Heart right ventricle (tissue), 16 donors: ENCODE measurements at regions of chr7 and their contacts with region 1.

Region 1: GRCh38 chr7:155380221-155380861 is 77.6 kb upstream of the EN2 start:
- DNase-seq: peak; percentile 53 to 60
- ATAC-seq: peak; percentile 57 to 86 (median 77)
- H3K4me3 ChIP-seq: no peak overlapping the region
- H3K27ac ChIP-seq: no peak overlapping the region
- H3K4me1 ChIP-seq: peaks cover 0 to 48% (median 40%) of the 10 kb centered on the region in 9 donors
- H3K27me3 ChIP-seq: peaks cover 59 to 100% (median 99%) of the 10 kb centered on the region in 7 donors
- CTCF ChIP-seq: peak; percentile 37 to 83 (median 72)

Region 2: DNA sequence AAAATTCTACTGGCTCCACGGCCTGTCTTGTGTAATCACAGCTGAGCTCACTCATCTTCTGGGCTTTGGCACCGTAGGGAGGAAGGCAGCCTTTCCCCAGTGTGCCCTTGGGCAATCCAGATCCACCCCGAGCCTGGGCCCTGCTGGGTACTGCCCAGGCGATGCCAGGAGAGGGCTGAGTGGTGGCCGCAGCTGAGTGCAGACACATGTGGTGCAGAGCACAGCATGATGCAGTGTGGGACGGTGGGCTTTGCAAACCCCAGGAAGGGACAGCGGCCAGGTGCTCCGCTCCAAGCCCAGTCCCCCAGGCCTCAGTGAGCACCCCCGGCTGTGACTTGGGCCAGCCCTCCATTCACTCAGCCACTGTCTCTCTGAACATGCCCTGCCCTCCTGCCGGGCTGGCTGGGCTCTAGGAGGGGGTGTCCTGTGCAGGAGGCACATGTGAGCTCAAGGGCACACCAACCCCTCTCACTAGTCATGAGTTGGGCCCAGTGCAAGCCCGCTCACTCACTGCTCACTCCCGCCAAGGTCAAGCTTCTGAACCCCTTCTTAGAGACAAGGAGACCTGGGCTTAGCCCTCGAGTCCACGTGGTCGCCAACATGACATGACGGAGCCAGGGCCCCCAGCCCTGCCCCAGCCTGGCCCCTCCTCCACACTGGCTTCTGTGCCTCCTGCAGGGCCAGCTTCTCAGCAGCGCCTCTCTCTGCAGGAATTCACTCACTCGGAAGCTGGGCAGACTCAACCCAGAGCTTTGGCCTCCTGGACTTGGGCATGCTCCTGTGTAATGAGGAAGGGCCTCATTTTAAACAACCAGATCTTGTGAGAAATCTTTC is 160.2 kb before region 1 on chr7:
- intact Hi-C with region 1: no loop called
- DNase-seq: no peak
- ATAC-seq: peak in 2 of 8 donors; percentile 42 to 56
- H3K4me3 ChIP-seq: no peak overlapping the region
- H3K27ac ChIP-seq: no peak overlapping the region
- H3K4me1 ChIP-seq: no peaks in the 10 kb centered on the region
- H3K27me3 ChIP-seq: peaks cover 0 to 35% (median 28%) of the 10 kb centered on the region in 7 donors
- CTCF ChIP-seq: no peak

Region 3: GRCh38 chr7:155338632-155339320 is 41.6 kb before region 1 on chr7:
- intact Hi-C with region 1: no loop called
- DNase-seq: no peak
- ATAC-seq: no peak
- H3K4me3 ChIP-seq: no peak overlapping the region
- H3K27ac ChIP-seq: no peak overlapping the region
- H3K4me1 ChIP-seq: no peaks in the 10 kb centered on the region
- H3K27me3 ChIP-seq: peaks cover 0 to 27% (median 21%) of the 10 kb centered on the region in 7 donors
- CTCF ChIP-seq: no peak

Region 4: DNA sequence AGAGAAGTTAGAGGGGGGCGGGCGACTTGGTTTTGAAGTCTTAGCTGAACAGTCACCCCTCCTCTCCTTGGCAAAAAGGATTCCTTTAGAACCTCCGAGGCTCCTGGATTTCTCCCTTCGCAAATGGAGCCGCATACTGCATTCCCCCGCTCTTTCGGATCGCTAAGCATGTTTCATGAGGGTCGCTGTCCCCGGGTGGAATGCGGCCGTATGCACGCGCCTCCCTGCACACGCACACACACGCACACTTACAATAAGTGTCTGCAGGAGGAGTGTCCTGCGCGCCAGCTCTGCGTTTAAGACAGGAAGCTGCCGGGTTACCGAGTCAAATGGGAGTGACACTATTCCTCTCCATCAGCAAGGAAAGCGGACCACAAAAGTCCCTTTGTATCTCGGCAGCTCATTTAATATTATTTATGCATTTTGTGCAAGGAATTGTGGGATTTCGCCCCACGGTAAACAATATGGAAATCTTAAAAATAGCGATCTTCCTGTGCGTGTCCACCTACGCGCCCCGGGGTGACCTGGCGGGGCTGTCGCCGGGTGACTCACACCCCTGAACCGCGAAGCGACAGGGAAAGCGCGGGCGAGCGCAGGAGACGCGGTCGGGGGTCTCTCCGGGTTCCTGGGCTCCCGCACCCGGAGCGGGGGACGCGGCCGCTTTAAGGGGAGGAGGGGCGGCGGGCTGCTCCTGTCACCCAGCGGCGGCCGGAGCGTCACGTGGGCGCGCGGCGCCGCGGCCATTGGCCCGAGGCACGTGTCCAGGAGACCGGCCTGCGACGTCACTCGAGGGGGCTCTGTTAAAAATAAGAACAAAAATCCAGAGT is 76.6 kb after region 1 on chr7:
- intact Hi-C with region 1: loop called in 1 of 10 experiments (anchors 10 kb)
- DNase-seq: peak; percentile 51 to 67
- ATAC-seq: peak; percentile 84 to 90 (median 86)
- H3K4me3 ChIP-seq: peak overlapping the region; percentile 44 to 66 (median 55)
- H3K27ac ChIP-seq: no peak overlapping the region
- H3K4me1 ChIP-seq: peaks cover 14 to 49% (median 37%) of the 10 kb centered on the region in 9 donors
- H3K27me3 ChIP-seq: peaks cover 90 to 97% (median 96%) of the 10 kb centered on the region in 7 donors
- CTCF ChIP-seq: no peak

Region 5: GRCh38 chr7:155509725-155510551 is 129.6 kb after region 1 on chr7:
- intact Hi-C with region 1: loop called in 1 of 10 experiments (anchors 10 kb)
- DNase-seq: no peak
- ATAC-seq: no peak
- H3K4me3 ChIP-seq: peak overlapping the region in 5 of 10 donors; percentile 6 to 26 (median 20)
- H3K27ac ChIP-seq: no peak overlapping the region
- H3K4me1 ChIP-seq: peaks cover 0 to 22% (median 8%) of the 10 kb centered on the region in 9 donors
- H3K27me3 ChIP-seq: peaks cover 33 to 100% (median 99%) of the 10 kb centered on the region in 7 donors
- CTCF ChIP-seq: no peak